ENCODE measurements at regions of chr5 and their contacts with region 1.

Region 1: GRCh38 chr5:122929980-122930379 is 84.6 kb downstream of the SNX24 start:
- DNase-seq: no peak
- H3K4me3 ChIP-seq: no peak overlapping the region
- H3K27me3 ChIP-seq: no peaks in the 10 kb centered on the region
- CTCF ChIP-seq: no peak

Region 2: DNA sequence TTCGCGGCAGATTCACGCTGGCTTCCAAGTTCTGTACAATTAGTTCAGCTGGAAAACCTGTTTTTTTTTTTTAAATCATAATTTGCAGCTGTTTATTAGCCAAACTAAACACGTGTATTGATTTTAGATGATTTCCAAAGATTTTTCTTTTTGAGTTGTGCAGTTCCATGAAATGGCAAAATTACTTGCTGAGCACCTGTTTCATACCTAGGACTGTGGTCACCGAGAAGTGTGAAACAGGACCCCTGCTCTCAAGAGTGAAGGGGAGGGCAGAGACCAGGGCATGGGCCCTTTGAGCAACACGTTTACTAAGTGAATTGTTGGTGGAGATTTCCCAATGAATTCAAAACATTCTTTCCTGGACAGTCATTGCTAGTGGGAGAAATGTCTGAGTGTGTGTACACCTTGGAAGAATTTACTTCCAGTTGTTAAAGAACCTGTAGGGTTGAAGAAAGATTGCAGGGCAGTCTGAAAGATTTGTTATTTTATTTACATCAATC is 83.9 kb before region 1 on chr5:
- CTCF ChIA-PET with region 1: no interaction called
- POLR2A ChIA-PET with region 1: interaction called, 11 read pairs
- DNase-seq: no peak
- H3K4me3 ChIP-seq: peak overlapping the region; percentile 78
- H3K27me3 ChIP-seq: no peaks in the 10 kb centered on the region
- CTCF ChIP-seq: no peak

Region 3: DNA sequence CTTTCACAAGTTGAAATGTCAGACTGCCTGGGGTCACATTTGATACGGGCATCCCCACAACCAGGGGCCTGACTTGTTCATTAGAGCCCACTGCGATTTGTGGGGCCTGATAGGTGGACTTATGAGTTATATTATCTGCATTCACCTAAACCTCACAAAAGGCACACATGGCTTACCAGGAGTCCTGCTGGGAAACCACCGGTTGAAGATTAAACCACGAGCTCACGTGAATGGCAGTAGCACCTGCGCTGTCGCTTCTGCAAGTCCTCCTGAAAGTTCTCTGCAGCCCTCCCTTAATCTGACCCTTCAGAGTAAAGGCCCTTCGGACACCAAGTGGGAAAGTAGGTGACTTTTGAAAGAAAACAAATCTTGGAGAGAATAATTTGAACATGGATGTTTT is 37.6 kb after region 1 on chr5:
- CTCF ChIA-PET with region 1: no interaction called
- POLR2A ChIA-PET with region 1: no interaction called
- DNase-seq: no peak
- H3K4me3 ChIP-seq: no peak overlapping the region
- H3K27me3 ChIP-seq: no peaks in the 10 kb centered on the region
- CTCF ChIP-seq: no peak

Measured in BJ (cell line).